GM12878 (cell line): ENCODE measurements at regions of chr1 and their contacts with region 1.

Region 1: DNA sequence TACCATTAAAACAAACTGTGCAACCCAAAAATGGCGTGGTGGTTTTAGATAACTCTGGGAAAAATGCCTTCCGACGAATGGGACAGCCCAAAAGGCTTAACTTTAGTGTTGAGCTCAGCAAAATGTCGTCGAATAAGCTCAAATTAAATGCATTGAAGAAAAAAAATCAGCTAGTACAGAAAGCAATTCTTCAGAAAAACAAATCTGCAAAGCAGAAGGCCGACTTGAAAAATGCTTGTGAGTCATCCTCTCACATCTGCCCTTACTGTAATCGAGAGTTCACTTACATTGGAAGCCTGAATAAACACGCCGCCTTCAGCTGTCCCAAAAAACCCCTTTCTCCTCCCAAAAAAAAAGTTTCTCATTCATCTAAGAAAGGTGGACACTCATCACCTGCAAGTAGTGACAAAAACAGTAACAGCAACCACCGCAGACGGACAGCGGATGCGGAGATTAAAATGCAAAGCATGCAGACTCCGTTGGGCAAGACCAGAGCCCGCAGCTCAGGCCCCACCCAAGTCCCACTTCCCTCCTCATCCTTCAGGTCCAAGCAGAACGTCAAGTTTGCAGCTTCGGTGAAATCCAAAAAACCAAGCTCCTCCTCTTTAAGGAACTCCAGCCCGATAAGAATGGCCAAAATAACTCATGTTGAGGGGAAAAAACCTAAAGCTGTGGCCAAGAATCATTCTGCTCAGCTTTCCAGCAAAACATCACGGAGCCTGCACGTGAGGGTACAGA is 82.1 kb downstream of the PRDM2 start:
- DNase-seq: no peak
- ATAC-seq: no peak
- H3K4me3 ChIP-seq: no peak overlapping the region
- H3K27ac ChIP-seq: no peak overlapping the region
- H3K4me1 ChIP-seq: no peaks in the 10 kb centered on the region
- H3K27me3 ChIP-seq: no peaks in the 10 kb centered on the region
- CTCF ChIP-seq: no peak
- EP300 ChIP-seq: no peak
- POLR2A ChIP-seq: no peak; the same call in 1 of the 2 replicates
- RAD21 ChIP-seq: no peak

Region 2: GRCh38 chr1:13582713-13583443 is 199.2 kb before region 1 on chr1:
- CTCF ChIA-PET with region 1: no interaction called
- POLR2A ChIA-PET with region 1: no interaction called
- RAD21 ChIA-PET with region 1: no interaction called
- SMC1A ChIA-PET with region 1: no interaction called
- in situ Hi-C with region 1: no loop called
- intact Hi-C with region 1: no loop called
- DNase-seq: no peak
- ATAC-seq: no peak
- H3K4me3 ChIP-seq: no peak overlapping the region
- H3K27ac ChIP-seq: no peak overlapping the region
- H3K4me1 ChIP-seq: no peaks in the 10 kb centered on the region
- H3K27me3 ChIP-seq: peaks cover 2% of the 10 kb centered on the region in 2 experiments; a peak in 2 of 4 replicates
- CTCF ChIP-seq: no peak
- EP300 ChIP-seq: no peak
- POLR2A ChIP-seq: no peak
- RAD21 ChIP-seq: no peak

Region 3: GRCh38 chr1:13792419-13792818 is 10.3 kb after region 1 on chr1:
- CTCF ChIA-PET with region 1: interaction called, 5 read pairs
- POLR2A ChIA-PET with region 1: interaction called, 6 read pairs
- RAD21 ChIA-PET with region 1: interaction called, 3 read pairs
- SMC1A ChIA-PET with region 1: interaction called, 11 read pairs
- in situ Hi-C with region 1: no loop called
- intact Hi-C with region 1: no loop called
- DNase-seq: no peak
- ATAC-seq: no peak
- H3K4me3 ChIP-seq: no peak overlapping the region
- H3K27ac ChIP-seq: peak overlapping the region; percentile 55
- H3K4me1 ChIP-seq: peaks cover 25% of the 10 kb centered on the region
- H3K27me3 ChIP-seq: no peaks in the 10 kb centered on the region
- CTCF ChIP-seq: no peak
- EP300 ChIP-seq: no peak
- POLR2A ChIP-seq: no peak
- RAD21 ChIP-seq: no peak